Vagina (tissue), 2 donors: ENCODE measurements at regions of chr16 and their contacts with region 1.

Region 1: DNA sequence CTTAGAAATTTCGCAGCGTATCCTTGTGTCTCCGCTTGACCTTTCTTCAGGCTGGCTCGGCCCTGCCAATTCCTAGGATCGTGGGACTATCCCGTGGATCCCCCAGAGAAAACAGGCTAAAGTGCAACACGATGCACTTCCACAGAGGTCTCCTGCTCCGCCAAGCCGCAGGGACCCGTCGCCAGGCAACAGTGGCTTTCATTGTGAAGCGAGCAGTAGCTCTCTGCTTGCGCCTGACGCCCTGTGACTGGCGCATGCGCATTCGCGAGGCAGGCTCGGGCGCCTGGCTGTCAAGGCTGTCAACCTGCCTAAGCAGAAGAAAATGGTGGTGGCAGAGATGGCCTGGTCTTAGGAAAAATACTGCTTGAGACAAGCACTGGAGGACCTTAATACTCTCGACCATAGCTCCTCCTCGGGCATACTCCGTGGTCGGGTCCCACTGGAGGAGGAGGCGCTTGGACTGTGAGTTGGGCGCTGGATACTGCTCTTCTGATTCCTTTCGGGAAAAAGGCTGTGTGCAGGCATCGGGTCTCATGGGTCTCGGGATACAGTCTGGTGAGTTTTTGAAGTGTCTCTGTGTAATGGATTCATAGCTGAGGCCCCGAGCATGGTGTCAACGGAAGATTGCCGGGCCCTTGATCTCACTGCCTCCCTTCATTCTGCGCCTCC is 2336.1 kb downstream of the TP53TG3F start:
- DNase-seq: no peak
- H3K4me3 ChIP-seq: no peak overlapping the region
- H3K27ac ChIP-seq: no peak overlapping the region
- H3K4me1 ChIP-seq: no peaks in the 10 kb centered on the region
- H3K27me3 ChIP-seq: no peaks in the 10 kb centered on the region
- CTCF ChIP-seq: no peak
- POLR2A ChIP-seq: no peak

Region 2: DNA sequence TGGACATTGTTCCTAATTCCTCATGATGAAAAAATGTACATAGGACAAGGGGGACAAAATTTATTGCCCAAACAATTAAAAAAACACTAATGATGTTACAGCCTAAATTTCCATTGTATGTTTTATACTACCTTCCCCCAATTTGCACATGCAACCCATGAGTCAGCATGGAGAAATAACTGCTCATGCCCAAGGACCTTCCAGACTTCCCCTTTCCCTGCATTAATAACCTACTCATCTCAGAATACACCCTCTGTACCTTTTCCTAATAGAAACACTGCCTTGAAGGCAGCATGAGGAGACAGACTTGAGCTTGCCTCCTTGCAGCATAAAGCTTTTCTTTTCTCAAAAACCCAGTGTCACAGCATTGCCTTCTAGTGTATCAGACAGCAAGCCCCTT is 66.7 kb after region 1 on chr16:
- intact Hi-C with region 1: loop called (anchors 10 kb)
- DNase-seq: no peak
- H3K4me3 ChIP-seq: no peak overlapping the region
- H3K27ac ChIP-seq: no peak overlapping the region
- H3K4me1 ChIP-seq: no peaks in the 10 kb centered on the region
- H3K27me3 ChIP-seq: no peaks in the 10 kb centered on the region
- CTCF ChIP-seq: no peak
- POLR2A ChIP-seq: no peak